CD8-positive, alpha-beta memory T cell (primary cell): ENCODE measurements at regions of chr17 and their contacts with region 1.

Region 1: DNA sequence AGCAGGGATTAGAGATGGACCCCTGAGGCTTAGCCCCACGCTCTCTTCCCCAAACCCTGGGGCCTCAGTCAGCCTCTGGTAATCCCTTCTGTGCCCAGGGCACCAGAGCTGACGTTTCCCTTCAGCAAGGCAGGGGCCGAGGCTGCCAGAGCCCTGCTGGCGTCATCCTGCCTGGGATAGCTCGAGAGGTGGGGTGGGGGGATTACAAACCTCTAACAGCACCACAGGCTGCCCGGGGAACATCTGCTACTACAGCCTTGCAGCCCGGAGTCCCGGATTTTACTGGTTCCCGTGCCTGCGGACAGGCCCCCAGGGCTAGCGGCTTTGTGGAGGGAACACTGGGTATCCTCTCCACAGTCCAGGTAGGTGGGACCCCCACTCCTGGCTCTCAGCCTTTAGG is at the start of gene AANAT:
- DNase-seq: no peak
- H3K4me3 ChIP-seq: no peak within 1 kb of the TSS
- H3K4me3 Mint-ChIP-seq: no peak within 1 kb of the TSS
- H3K27ac ChIP-seq: no peak within 1 kb of the TSS
- H3K27ac Mint-ChIP-seq: peak within 1 kb of the TSS in 3 of 8 donors; percentile 23 to 36 (median 32)
- H3K4me1 ChIP-seq: no peaks in the 10 kb centered on the region
- H3K4me1 Mint-ChIP-seq: peaks cover 0 to 5% (median 3%) of the 10 kb centered on the region in 3 donors
- H3K27me3 ChIP-seq: no peaks in the 10 kb centered on the region
- H3K27me3 Mint-ChIP-seq: no peaks in the 10 kb centered on the region
- total RNA-seq, gene AANAT: not detected

Region 2: DNA sequence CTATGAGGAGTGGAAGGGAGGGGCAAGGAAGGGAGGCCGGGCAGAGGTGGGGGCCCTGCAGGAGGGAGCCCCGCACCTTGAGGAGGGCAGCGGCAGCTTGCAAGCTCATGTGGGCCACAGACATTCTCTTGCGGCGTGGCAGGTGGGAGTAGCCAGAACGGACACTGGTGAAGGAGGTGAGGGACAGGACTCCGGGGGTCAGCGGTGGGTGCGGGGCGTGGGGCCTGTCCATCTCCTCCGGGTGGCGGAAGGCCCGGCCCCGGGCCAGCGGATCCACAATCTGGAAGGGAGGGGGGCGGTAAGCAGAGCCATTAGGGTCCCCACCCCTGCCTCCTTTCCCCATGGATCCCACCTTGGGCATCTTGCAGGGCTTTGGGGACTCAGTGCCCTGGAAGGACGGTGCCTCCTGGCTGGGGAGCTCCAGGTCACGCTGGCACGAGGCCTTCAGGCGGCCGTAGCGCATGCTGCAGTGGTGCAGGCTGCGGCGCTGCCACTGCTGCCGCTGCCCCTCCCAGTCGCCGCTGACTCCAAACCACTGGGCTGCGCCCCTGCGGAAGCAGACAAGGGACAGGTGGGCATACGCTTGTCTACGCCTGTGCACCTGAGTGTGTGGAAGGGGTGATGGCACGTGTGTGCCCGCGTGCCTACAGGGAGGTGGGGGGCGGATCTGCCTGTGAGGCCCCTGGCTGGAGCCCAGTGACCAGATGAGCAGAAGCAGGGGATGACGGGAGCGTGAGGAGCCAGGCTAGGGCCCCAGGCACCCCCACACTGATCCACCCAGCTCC is 11.6 kb after region 1 on chr17:
- CTCF ChIA-PET with region 1: interaction called, 14 read pairs
- POLR2A ChIA-PET with region 1: no interaction called
- DNase-seq: no peak
- H3K4me3 ChIP-seq: no peak overlapping the region
- H3K4me3 Mint-ChIP-seq: no peak overlapping the region
- H3K27ac ChIP-seq: no peak overlapping the region
- H3K27ac Mint-ChIP-seq: no peak overlapping the region
- H3K4me1 ChIP-seq: no peaks in the 10 kb centered on the region
- H3K4me1 Mint-ChIP-seq: peaks cover 4 to 7% (median 4%) of the 10 kb centered on the region in 3 donors
- H3K27me3 ChIP-seq: no peaks in the 10 kb centered on the region
- H3K27me3 Mint-ChIP-seq: no peaks in the 10 kb centered on the region

Region 3: GRCh38 chr17:76501018-76501826 is 33.9 kb after region 1 on chr17 and contains the start of gene RHBDF2:
- CTCF ChIA-PET with region 1: interaction called, 74 read pairs
- POLR2A ChIA-PET with region 1: interaction called, 3 read pairs
- DNase-seq: peak; percentile 93 to 96 (median 94)
- H3K4me3 ChIP-seq: peak within 1 kb of the TSS; percentile 85
- H3K4me3 Mint-ChIP-seq: peak within 1 kb of the TSS; percentile 87 to 98 (median 91)
- H3K27ac ChIP-seq: peak within 1 kb of the TSS; percentile 65
- H3K27ac Mint-ChIP-seq: peak within 1 kb of the TSS; percentile 96 to 100 (median 98)
- H3K4me1 ChIP-seq: peaks cover 54% of the 10 kb centered on the region
- H3K4me1 Mint-ChIP-seq: peaks cover 40 to 65% (median 46%) of the 10 kb centered on the region in 3 donors
- H3K27me3 ChIP-seq: no peaks in the 10 kb centered on the region
- H3K27me3 Mint-ChIP-seq: no peaks in the 10 kb centered on the region
- total RNA-seq, gene RHBDF2: 38.2 to 42.5 TPM